ENCODE measurements at regions of chr11 and their contacts with region 1.

Region 1: GRCh38 chr11:4636962-4637661 is at the start of gene OR51D1:
- DNase-seq: peak; percentile 81
- H3K4me3 Mint-ChIP-seq: no peak within 1 kb of the TSS
- H3K27ac Mint-ChIP-seq: no peak within 1 kb of the TSS
- H3K4me1 Mint-ChIP-seq: no peaks in the 10 kb centered on the region
- H3K27me3 Mint-ChIP-seq: peaks cover 2% of the 10 kb centered on the region
- total RNA-seq, gene OR51D1: not detected

Region 2: GRCh38 chr11:4187055-4187988 is 449.8 kb before region 1 on chr11:
- CTCF ChIA-PET with region 1: interaction called, 14 read pairs
- intact Hi-C with region 1: loop called (anchors 1 kb)
- DNase-seq: peak; percentile 89
- H3K4me3 Mint-ChIP-seq: peak overlapping the region; percentile 73
- H3K27ac Mint-ChIP-seq: no peak overlapping the region
- H3K4me1 Mint-ChIP-seq: peaks cover 2% of the 10 kb centered on the region
- H3K27me3 Mint-ChIP-seq: peaks cover 9% of the 10 kb centered on the region

Region 3: DNA sequence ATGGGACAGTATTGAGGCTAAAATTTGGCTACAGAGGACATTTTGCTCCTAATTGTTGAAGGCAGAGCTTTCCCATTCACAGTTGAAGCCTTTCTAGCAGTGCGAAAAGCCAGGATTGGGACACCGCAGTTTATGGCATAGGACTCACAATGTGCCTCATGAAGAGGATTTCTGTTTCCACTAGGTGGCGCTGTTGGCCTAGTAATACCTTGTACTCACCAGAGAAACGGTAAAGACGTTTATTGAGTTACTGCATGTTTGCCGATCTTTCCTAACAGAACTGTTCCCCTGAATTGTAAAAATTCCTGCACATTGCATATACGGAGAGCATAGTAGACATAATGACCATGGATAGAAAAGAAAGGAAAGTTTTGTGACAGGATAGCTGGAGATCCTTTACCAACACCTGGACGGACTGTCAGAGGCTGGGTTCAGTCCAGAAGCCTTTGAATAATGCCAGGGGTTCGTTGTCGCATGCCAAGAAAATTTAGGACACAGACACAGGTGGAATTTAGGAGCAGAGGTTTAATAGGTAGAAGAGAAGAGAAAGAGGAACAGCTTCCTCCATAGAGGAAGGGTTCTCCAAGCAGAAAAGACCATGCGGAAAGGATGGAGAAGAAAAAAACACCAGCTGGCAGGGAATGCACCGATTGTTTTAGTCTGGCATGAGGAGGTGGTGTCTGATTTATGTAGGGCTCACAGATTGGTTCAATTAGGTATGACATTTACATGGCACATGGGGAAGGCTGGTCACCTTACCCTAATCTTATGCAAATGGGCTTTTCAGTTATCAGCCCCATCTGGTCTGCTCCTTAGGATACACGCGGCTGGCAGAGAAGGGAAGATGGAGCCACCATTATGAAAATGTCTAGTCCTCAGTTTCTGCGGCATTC is 10.7 kb before region 1 on chr11:
- CTCF ChIA-PET with region 1: interaction called, 47 read pairs
- intact Hi-C with region 1: no loop called
- DNase-seq: peak; percentile 81
- H3K4me3 Mint-ChIP-seq: no peak overlapping the region
- H3K27ac Mint-ChIP-seq: no peak overlapping the region
- H3K4me1 Mint-ChIP-seq: no peaks in the 10 kb centered on the region
- H3K27me3 Mint-ChIP-seq: peaks cover 34% of the 10 kb centered on the region

Region 4: GRCh38 chr11:4826425-4826824 is 189.3 kb after region 1 on chr11:
- CTCF ChIA-PET with region 1: no interaction called
- intact Hi-C with region 1: loop called (anchors 1 kb)
- DNase-seq: no peak
- H3K4me3 Mint-ChIP-seq: no peak overlapping the region
- H3K27ac Mint-ChIP-seq: no peak overlapping the region
- H3K4me1 Mint-ChIP-seq: no peaks in the 10 kb centered on the region
- H3K27me3 Mint-ChIP-seq: peaks cover 8% of the 10 kb centered on the region

Region 5: GRCh38 chr11:5291207-5291838 is 654.2 kb after region 1 on chr11:
- CTCF ChIA-PET with region 1: no interaction called
- intact Hi-C with region 1: loop called (anchors 1 kb)
- DNase-seq: no peak
- H3K4me3 Mint-ChIP-seq: no peak overlapping the region
- H3K27ac Mint-ChIP-seq: no peak overlapping the region
- H3K4me1 Mint-ChIP-seq: no peaks in the 10 kb centered on the region
- H3K27me3 Mint-ChIP-seq: no peaks in the 10 kb centered on the region

Region 6: GRCh38 chr11:5808500-5809121 is 1171.5 kb after region 1 on chr11 and contains the start of gene OR52N2:
- CTCF ChIA-PET with region 1: no interaction called
- intact Hi-C with region 1: loop called (anchors 2 kb)
- DNase-seq: peak; percentile 86
- H3K4me3 Mint-ChIP-seq: peak within 1 kb of the TSS; percentile 89
- H3K27ac Mint-ChIP-seq: peak within 1 kb of the TSS; percentile 67
- H3K4me1 Mint-ChIP-seq: peaks cover 8% of the 10 kb centered on the region
- H3K27me3 Mint-ChIP-seq: peaks cover 5% of the 10 kb centered on the region
- total RNA-seq, gene OR52N2: not detected